ENCODE measurements at regions of chr1 and their contacts with region 1.

Region 1: DNA sequence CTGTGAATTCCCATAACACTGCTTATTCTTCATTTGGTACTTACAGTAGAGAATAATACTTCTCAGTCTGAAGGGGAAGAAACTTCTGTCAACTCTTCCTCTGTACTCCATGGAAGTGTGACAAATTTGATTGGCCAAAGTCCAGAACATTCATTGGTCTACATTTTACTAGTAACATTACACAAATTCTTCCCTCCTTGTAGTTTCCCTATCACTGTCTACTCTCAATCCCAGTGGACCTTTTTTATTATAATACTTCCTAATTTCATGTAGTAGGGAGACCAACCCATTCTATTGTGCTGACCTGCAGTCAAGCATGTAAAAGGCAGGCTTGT is 74.7 kb downstream of the ALG6 start:
- DNase-seq: no peak
- H3K4me3 Mint-ChIP-seq: no peak overlapping the region
- H3K27ac Mint-ChIP-seq: no peak overlapping the region
- H3K4me1 Mint-ChIP-seq: no peaks in the 10 kb centered on the region
- H3K27me3 Mint-ChIP-seq: no peaks in the 10 kb centered on the region
- CTCF ChIP-seq: no peak

Region 2: DNA sequence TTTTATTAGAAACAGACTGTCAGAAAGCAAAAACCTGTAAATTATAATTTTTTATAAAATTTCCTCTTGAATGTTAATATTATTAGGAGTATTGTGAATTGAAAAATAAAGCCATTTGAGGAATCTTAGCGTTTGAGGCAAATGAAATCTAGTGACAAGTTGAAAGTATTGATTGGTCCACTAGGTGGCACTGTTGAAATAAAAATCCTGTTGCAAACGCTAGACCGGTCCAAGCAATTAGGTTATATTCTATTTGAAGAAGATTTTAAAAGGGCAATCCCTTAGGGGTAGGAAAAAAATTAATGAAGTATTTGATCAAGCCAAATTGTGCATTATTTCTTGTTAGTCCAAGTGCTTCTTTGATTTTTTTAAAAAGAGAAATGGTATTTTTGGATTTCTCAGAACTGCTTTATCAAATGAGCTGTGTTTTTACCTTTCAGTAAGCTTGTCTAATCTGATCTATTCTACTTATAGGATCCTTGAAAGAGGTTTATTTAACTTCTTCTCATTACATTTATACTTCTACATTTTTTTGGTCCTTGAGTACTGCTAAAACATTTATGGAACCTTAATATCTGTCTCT is 600.4 kb before region 1 on chr1:
- CTCF ChIA-PET with region 1: interaction called, 13 read pairs
- POLR2A ChIA-PET with region 1: interaction called, 3 read pairs
- intact Hi-C with region 1: loop called (anchors 10 kb)
- DNase-seq: peak; percentile 69
- H3K4me3 Mint-ChIP-seq: no peak overlapping the region
- H3K27ac Mint-ChIP-seq: no peak overlapping the region
- H3K4me1 Mint-ChIP-seq: no peaks in the 10 kb centered on the region
- H3K27me3 Mint-ChIP-seq: no peaks in the 10 kb centered on the region
- CTCF ChIP-seq: peak; percentile 47

Region 3: DNA sequence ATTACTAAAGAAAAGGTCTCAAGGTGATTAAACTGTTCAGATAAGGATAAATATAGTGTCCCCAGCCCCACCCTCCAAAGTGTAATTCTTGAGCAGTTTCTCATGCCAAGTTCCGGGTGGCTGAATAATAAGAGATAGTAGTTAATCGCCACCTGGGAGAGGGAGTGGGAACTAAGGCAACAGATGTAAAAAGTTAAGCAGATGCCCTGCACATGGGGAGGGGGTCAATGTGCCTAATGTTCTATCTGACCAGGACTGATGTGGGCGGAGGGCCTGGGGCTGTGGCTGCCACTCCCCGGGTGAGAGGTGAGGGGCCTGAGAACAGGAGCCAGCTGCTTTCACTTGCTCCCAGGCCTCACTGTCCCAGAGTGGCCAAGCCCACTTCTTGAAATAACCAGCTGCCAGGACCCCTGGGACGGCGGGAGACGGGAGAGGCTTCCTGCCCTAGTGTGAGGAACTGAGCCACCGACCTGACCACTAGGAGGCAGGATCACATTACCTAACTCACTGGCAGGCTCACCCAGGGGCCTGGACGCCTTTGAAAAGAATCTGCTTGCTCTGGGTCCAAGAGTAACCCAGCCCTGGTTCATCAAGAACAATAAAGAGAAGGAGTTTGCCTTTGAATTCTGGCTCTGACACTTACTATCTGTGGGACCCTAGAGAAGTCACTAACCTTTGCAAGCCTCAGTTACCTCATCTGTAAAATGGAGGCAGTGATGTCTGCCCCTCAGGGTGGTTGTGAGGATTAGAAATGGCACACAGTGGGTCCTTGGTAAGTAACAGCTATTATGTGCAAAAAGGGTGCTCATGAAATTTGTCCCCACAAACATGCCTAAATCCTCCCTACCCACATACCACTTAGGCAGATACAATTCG is 479.0 kb before region 1 on chr1:
- CTCF ChIA-PET with region 1: interaction called, 5 read pairs
- POLR2A ChIA-PET with region 1: no interaction called
- intact Hi-C with region 1: loop called (anchors 1 kb)
- DNase-seq: peak; percentile 54
- H3K4me3 Mint-ChIP-seq: no peak overlapping the region
- H3K27ac Mint-ChIP-seq: no peak overlapping the region
- H3K4me1 Mint-ChIP-seq: no peaks in the 10 kb centered on the region
- H3K27me3 Mint-ChIP-seq: peaks cover 34% of the 10 kb centered on the region
- CTCF ChIP-seq: peak; percentile 37

Region 4: GRCh38 chr1:63004868-63005267 is 437.2 kb before region 1 on chr1:
- CTCF ChIA-PET with region 1: interaction called, 9 read pairs
- POLR2A ChIA-PET with region 1: no interaction called
- intact Hi-C with region 1: loop called (anchors 2 kb)
- DNase-seq: peak; percentile 43
- H3K4me3 Mint-ChIP-seq: no peak overlapping the region
- H3K27ac Mint-ChIP-seq: no peak overlapping the region
- H3K4me1 Mint-ChIP-seq: no peaks in the 10 kb centered on the region
- H3K27me3 Mint-ChIP-seq: peaks cover 33% of the 10 kb centered on the region
- CTCF ChIP-seq: peak; percentile 23

Region 5: DNA sequence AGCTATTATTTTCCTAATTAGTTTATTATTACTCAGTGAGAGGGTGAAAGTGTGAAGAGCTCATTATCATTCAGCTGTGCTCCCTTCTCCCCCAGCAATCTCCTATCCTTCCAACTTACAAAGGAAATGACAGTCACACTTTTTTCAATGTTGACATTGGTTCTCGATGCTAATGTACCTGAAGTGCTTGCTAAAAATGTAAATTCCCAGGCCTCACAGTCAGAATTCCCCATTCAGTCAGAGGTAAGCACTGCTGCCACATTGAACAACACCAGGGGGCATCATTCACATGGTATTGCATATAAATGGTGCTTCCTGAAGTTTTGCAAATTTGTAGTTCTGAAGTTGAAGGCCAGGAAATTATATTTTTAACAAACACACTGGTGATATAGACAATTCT is 252.4 kb before region 1 on chr1:
- CTCF ChIA-PET with region 1: no interaction called
- POLR2A ChIA-PET with region 1: no interaction called
- intact Hi-C with region 1: loop called (anchors 1 kb)
- DNase-seq: peak; percentile 50
- H3K4me3 Mint-ChIP-seq: no peak overlapping the region
- H3K27ac Mint-ChIP-seq: no peak overlapping the region
- H3K4me1 Mint-ChIP-seq: no peaks in the 10 kb centered on the region
- H3K27me3 Mint-ChIP-seq: no peaks in the 10 kb centered on the region
- CTCF ChIP-seq: peak; percentile 17

Region 6: DNA sequence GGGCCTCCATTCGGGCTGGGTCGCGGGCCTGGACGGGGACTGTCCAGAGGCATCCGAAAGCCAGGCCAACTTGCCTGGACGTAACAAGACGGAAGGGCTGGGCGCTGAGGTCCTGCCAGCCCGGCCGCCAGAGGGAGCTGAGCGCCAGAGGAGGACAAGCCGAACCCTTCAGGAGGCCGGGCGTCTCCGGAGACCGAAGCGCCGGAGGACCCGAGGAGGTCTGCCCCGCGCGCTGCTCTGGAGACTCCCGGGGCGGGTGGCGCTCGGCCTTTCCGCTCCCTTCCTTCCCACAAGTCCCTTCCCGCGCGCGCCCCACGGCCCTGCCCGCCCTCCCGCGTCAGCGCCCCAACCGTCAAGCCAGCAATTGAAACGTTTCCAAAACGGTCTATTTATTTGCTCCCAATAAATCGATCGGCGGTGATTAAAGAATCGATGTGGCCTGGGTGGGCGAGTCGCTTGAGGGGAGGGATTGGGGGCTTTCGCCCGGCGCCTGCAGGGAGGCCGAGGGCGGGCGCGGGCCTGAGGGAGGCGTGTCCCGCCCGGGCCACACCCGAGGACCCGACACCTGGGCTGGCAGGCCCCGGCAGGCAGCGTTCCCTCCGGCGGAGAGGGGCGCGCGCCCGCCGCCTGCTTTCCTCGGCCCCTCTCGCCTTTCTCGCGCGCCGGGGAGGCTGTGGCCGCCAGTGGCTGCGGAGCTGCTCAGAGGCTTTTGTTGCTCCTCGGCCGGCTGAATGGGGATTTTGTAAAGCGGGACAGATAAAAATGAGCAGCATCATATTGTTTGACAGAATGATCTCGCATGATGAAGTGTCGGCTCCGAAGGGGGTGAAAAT is 124.9 kb before region 1 on chr1:
- CTCF ChIA-PET with region 1: interaction called, 4 read pairs
- POLR2A ChIA-PET with region 1: no interaction called
- intact Hi-C with region 1: loop called (anchors 1 kb)
- DNase-seq: peak; percentile 65
- H3K4me3 Mint-ChIP-seq: peak overlapping the region; percentile 52
- H3K27ac Mint-ChIP-seq: no peak overlapping the region
- H3K4me1 Mint-ChIP-seq: no peaks in the 10 kb centered on the region
- H3K27me3 Mint-ChIP-seq: no peaks in the 10 kb centered on the region
- CTCF ChIP-seq: peak; percentile 57

Region 7: DNA sequence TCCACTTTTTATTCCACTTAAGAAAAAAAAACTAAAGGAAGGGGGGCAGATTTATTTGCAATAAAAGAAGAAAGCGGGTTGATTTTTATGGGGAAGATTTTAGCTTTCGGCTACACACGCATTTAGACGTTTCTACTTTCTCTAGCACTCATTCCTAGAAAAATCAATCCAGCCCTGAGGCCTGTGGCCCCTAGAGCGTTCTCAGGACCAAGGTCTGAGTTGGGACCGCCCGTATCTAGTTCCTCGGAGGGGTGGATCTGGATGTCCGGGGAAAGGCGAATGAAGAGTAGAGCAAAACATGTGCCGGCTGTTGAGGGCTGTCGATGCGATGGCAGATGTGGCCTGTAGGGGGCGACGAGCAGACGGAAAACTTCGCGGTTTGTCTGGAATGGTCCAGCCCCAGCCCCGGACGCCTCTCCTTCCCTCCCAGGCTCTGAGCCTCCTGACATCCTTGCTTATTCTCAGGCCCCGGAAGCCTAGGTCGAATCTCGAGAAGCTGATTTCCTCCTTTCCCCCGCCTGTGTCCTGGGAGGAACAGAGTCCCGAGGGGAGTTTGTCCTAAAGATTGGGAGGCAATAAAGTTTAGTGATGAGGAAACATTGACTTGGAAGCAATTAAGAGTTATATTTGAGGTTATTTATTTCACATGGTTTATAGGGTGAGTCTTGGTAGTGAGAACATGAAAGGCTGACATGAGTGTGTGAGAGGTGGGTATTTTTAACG is 114.5 kb before region 1 on chr1:
- CTCF ChIA-PET with region 1: interaction called, 5 read pairs
- POLR2A ChIA-PET with region 1: no interaction called
- intact Hi-C with region 1: loop called (anchors 1 kb)
- DNase-seq: peak; percentile 66
- H3K4me3 Mint-ChIP-seq: no peak overlapping the region
- H3K27ac Mint-ChIP-seq: no peak overlapping the region
- H3K4me1 Mint-ChIP-seq: no peaks in the 10 kb centered on the region
- H3K27me3 Mint-ChIP-seq: peaks cover 21% of the 10 kb centered on the region
- CTCF ChIP-seq: peak; percentile 74

Region 8: DNA sequence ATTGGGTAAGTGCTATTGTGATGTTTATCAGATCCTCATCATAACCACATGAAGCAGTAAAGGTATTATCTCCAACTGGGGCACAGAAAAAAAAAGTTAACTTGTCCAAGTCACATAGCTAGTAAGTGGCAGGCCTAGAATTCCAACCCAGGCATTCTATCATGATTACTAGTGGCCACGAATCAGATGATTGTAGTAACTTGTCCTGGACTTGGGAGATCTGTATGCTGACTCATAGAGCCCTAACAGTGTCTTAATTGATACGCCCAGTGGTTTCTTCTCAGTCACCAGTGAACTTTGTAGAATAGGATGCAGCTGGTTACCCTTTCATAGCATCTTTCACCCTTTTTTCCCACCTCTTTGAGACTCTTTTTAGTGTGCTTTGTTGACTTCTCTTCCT is 670.2 kb after region 1 on chr1:
- CTCF ChIA-PET with region 1: no interaction called
- POLR2A ChIA-PET with region 1: no interaction called
- intact Hi-C with region 1: no loop called
- DNase-seq: peak; percentile 34
- H3K4me3 Mint-ChIP-seq: no peak overlapping the region
- H3K27ac Mint-ChIP-seq: no peak overlapping the region
- H3K4me1 Mint-ChIP-seq: peaks cover 13% of the 10 kb centered on the region
- H3K27me3 Mint-ChIP-seq: no peaks in the 10 kb centered on the region
- CTCF ChIP-seq: no peak